Motor neuron (in vitro differentiated cells): ENCODE measurements at regions of chrX and their contacts with region 1.

Region 1: GRCh38 chrX:120468825-120469525 is at the start of gene LAMP2:
- ATAC-seq: peak; percentile 92 to 98 (median 94)
- H3K4me3 ChIP-seq: peak within 1 kb of the TSS; percentile 60 to 98 (median 89)
- H3K27ac ChIP-seq: peak within 1 kb of the TSS; percentile 73 to 93
- H3K4me1 ChIP-seq: peaks cover 5 to 10% of the 10 kb centered on the region in 2 donors
- total RNA-seq, gene LAMP2: 30.8 to 197 (median 80.6) TPM

Region 2: DNA sequence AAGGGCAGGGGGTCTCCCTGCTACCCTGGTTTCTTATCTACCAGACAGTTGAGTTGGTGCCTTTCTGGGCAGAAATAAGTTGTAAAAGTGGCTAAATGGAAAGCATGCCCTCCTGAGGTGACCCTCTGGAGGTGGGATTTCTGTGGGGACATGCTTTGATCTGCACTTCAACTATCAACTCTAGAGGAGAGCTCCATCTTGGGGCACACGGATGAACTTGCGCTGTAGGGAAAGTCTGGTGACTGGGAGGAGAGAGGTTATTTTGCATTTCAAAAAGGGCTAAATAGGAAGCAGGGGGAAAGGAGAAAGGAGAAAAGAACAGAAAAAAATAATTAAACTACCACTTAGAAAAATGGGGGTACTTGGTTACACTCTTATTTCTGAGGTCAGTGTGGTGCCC is 378.8 kb before region 1 on chrX:
- in situ Hi-C with region 1: loop called in 1 of 9 experiments (anchors 25 kb)
- ATAC-seq: no peak
- H3K4me3 ChIP-seq: no peak overlapping the region
- H3K27ac ChIP-seq: no peak overlapping the region
- H3K4me1 ChIP-seq: no peaks in the 10 kb centered on the region

Region 3: GRCh38 chrX:120308959-120309872 is 159.8 kb before region 1 on chrX:
- in situ Hi-C with region 1: loop called in 2 of 9 experiments (anchors 25 kb)
- ATAC-seq: peak; percentile 57 to 89 (median 70)
- H3K4me3 ChIP-seq: peak overlapping the region; percentile 38 to 49 (median 48)
- H3K27ac ChIP-seq: no peak overlapping the region
- H3K4me1 ChIP-seq: no peaks in the 10 kb centered on the region

Region 4: GRCh38 chrX:121858867-121859647 is 1390.1 kb after region 1 on chrX:
- in situ Hi-C with region 1: no loop called
- ATAC-seq: no peak
- H3K4me3 ChIP-seq: no peak overlapping the region
- H3K27ac ChIP-seq: no peak overlapping the region
- H3K4me1 ChIP-seq: no peaks in the 10 kb centered on the region